ENCODE measurements at regions of chr16 and their contacts with region 1.

Region 1: DNA sequence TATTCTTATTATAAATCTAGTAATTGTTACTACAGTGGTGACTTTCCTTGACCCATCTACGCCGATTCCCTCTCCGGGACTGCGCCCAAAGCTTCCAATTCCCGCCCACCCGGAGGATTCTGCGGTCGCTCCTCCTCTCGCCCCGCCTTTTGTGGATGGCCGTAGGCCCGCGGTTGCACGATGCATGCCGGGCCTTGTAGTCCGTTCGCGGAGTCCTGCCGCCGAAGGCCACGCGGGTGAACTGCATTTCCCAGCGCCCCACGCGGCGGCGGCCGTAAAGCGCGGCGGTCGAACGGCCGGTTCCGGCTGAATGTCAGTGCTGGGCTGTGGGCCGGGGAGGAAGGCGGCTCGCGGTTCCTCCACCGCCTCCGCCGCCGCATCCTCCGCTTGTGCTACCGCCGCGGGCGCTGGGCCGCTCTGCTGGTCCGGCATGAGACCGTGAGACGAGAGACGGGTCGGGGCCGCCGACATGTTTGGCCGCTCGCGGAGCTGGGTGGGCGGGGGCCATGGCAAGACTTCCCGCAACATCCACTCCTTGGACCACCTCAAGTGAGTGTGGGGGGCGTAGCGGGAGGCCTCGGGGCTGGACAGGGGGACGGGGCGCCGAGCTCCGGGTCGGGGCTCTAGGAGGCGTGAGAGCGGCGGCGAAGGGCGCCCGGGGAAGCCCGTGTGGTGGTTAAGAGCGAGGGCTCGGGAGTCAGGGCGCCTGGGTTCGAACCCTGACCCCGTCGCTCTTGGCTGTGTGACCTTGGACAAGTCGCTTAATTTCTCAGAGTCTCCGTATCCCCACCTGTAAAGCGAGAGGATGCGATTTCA is at the start of gene CLEC16A:
- DNase-seq: peak; percentile 96 to 97
- ATAC-seq: peak; percentile 50 to 66
- H3K4me3 ChIP-seq: peak within 1 kb of the TSS; percentile 91 to 97 (median 92)
- H3K27ac ChIP-seq: peak within 1 kb of the TSS; percentile 91 to 96 (median 94)
- H3K4me1 ChIP-seq: peaks cover 52 to 57% of the 10 kb centered on the region in 2 donors
- H3K27me3 ChIP-seq: no peaks in the 10 kb centered on the region
- CTCF ChIP-seq: peak in 2 of 5 experiments; percentile 19 to 30
- POLR2A ChIP-seq: peak; percentile 93 to 95
- total RNA-seq, gene CLEC16A: 24.5 to 33.0 (median 29.3) TPM

Region 2: DNA sequence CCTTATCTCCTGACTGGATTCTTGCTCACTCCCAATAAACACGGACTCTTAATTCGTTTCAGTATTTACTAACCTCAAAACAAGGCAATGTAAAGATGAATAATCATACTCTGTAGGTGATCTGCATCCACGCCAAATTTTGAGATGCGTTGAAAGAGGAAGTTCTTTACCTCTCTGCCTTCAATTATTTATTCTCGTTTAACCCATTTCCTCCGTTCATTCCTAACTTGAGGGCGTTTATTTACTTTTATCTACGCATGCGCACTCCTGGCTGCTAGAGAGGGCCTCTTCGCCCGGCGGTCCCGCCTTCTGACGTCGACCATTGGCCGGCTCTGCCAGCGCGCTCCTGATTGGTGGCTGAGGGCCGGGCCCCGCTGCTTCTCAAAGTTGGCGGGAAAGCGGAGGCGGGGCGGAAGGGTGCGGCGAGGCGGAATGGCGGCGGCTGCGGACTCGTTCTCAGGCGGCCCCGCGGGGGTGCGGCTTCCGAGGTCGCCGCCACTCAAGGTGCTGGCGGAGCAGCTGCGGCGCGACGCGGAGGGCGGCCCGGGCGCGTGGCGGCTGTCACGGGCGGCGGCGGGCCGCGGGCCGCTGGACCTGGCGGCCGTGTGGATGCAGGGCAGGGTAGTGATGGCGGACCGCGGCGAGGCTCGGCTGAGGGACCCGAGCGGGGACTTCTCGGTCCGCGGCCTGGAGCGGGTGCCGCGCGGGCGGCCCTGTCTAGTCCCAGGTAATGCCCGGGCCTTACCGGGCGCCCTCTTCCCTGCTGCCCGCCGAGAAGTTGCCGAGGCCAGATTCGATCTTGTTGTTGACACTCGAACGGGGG is 400.8 kb after region 1 on chr16 and contains the start of gene RMI2:
- in situ Hi-C with region 1: no loop called
- intact Hi-C with region 1: loop called (anchors 5 kb)
- DNase-seq: peak; percentile 94 to 95
- ATAC-seq: peak; percentile 96 to 98
- H3K4me3 ChIP-seq: peak within 1 kb of the TSS; percentile 48 to 64 (median 56)
- H3K27ac ChIP-seq: peak within 1 kb of the TSS in 2 of 4 donors; percentile 36 to 37
- H3K4me1 ChIP-seq: peaks cover 0 to 5% of the 10 kb centered on the region in 2 donors
- H3K27me3 ChIP-seq: no peaks in the 10 kb centered on the region
- CTCF ChIP-seq: no peak
- POLR2A ChIP-seq: no peak
- total RNA-seq, gene RMI2: 0.44 to 0.49 TPM in 2 of 4 donors, not detected in the others

Region 3: GRCh38 chr16:11497851-11498289 is 553.4 kb after region 1 on chr16:
- in situ Hi-C with region 1: no loop called
- intact Hi-C with region 1: loop called (anchors 5 kb)
- DNase-seq: peak in 1 of 2 donors; percentile 59
- ATAC-seq: no peak
- H3K4me3 ChIP-seq: no peak overlapping the region
- H3K27ac ChIP-seq: peak overlapping the region; percentile 84 to 96 (median 92)
- H3K4me1 ChIP-seq: peaks cover 33 to 34% of the 10 kb centered on the region in 2 donors
- H3K27me3 ChIP-seq: no peaks in the 10 kb centered on the region
- CTCF ChIP-seq: no peak
- POLR2A ChIP-seq: no peak

Region 4: DNA sequence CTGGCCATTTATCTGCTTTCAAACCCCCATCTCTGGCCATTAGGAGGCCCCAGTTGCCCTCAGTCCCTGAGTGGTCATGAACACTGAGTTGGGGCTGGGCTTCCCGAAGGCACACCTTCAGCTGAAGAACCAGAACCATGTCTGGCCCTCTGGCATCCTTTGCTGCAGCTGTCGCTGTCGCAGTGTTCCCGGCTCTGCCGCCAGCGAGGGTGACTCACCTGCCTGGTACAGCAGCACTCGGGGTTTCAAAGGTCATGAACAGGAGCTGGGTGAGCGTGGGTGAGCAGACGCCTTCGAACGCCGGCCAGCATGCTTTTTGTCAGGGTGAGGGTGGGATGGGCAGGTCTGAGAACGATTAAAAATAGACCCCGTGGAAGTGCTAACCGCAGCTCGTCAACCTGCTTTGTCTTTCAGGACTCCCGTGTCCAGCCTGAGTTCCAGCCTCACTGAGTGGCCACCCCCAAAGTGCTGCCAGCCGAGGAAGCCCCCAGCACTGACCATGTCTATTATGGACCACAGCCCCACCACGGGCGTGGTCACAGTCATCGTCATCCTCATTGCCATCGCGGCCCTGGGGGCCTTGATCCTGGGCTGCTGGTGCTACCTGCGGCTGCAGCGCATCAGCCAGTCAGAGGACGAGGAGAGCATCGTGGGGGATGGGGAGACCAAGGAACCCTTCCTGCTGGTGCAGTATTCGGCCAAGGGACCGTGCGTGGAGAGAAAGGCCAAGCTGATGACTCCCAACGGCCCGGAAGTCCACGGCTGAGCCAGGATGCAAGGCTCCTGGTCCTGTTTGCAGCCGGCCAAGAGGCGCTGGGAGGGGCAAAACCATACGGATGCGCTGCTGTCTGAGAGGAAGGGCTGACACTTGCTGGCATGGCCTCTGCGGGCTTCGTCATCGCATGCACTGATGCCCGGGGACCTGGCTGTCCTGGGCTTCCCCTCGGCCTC is 731.4 kb after region 1 on chr16:
- in situ Hi-C with region 1: no loop called
- intact Hi-C with region 1: loop called (anchors 5 kb)
- DNase-seq: peak; percentile 95 to 99
- ATAC-seq: peak; percentile 65 to 75
- H3K4me3 ChIP-seq: no peak overlapping the region
- H3K27ac ChIP-seq: peak overlapping the region; percentile 91 to 99 (median 97)
- H3K4me1 ChIP-seq: peaks cover 97 to 98% of the 10 kb centered on the region in 2 donors
- H3K27me3 ChIP-seq: no peaks in the 10 kb centered on the region
- CTCF ChIP-seq: peak in 1 of 5 experiments; percentile 29
- POLR2A ChIP-seq: peak; percentile 56 to 59

Region 5: GRCh38 chr16:11734025-11734652 is 789.7 kb after region 1 on chr16:
- in situ Hi-C with region 1: no loop called
- intact Hi-C with region 1: loop called (anchors 10 kb)
- DNase-seq: no peak
- ATAC-seq: peak in 1 of 2 donors; percentile 13
- H3K4me3 ChIP-seq: no peak overlapping the region
- H3K27ac ChIP-seq: peak overlapping the region; percentile 95 to 100 (median 99)
- H3K4me1 ChIP-seq: peaks cover 44 to 53% of the 10 kb centered on the region in 2 donors
- H3K27me3 ChIP-seq: no peaks in the 10 kb centered on the region
- CTCF ChIP-seq: no peak
- POLR2A ChIP-seq: no peak

Region 6: GRCh38 chr16:11851294-11852091 is 907.0 kb after region 1 on chr16 and contains the start of gene RSL1D1:
- in situ Hi-C with region 1: no loop called
- intact Hi-C with region 1: loop called (anchors 10 kb)
- DNase-seq: peak; percentile 85 to 91
- ATAC-seq: peak; percentile 96
- H3K4me3 ChIP-seq: peak within 1 kb of the TSS; percentile 87 to 98 (median 92)
- H3K27ac ChIP-seq: peak within 1 kb of the TSS; percentile 95 to 98 (median 96)
- H3K4me1 ChIP-seq: peaks cover 35 to 39% of the 10 kb centered on the region in 2 donors
- H3K27me3 ChIP-seq: no peaks in the 10 kb centered on the region
- CTCF ChIP-seq: peak in 2 of 5 experiments; percentile 7 to 30
- POLR2A ChIP-seq: peak; percentile 98 to 99
- total RNA-seq, gene RSL1D1: 215 to 302 (median 259) TPM

Region 7: GRCh38 chr16:11915644-11916523 is 971.4 kb after region 1 on chr16 and contains the start of gene GSPT1:
- in situ Hi-C with region 1: no loop called
- intact Hi-C with region 1: loop called (anchors 10 kb)
- DNase-seq: peak; percentile 99
- ATAC-seq: peak; percentile 94 to 97
- H3K4me3 ChIP-seq: peak within 1 kb of the TSS; percentile 81 to 89 (median 84)
- H3K27ac ChIP-seq: peak within 1 kb of the TSS; percentile 92 to 99 (median 96)
- H3K4me1 ChIP-seq: peaks cover 29 to 34% of the 10 kb centered on the region in 2 donors
- H3K27me3 ChIP-seq: no peaks in the 10 kb centered on the region
- CTCF ChIP-seq: peak in 4 of 5 experiments; percentile 17 to 58 (median 24)
- POLR2A ChIP-seq: peak; percentile 93 to 96
- total RNA-seq, gene GSPT1: 86.9 to 169 (median 139) TPM

Measured in gastrocnemius medialis (tissue), 4 donors.